PC-9 (cell line): ENCODE measurements at regions of chr5 and their contacts with region 1.

Region 1: DNA sequence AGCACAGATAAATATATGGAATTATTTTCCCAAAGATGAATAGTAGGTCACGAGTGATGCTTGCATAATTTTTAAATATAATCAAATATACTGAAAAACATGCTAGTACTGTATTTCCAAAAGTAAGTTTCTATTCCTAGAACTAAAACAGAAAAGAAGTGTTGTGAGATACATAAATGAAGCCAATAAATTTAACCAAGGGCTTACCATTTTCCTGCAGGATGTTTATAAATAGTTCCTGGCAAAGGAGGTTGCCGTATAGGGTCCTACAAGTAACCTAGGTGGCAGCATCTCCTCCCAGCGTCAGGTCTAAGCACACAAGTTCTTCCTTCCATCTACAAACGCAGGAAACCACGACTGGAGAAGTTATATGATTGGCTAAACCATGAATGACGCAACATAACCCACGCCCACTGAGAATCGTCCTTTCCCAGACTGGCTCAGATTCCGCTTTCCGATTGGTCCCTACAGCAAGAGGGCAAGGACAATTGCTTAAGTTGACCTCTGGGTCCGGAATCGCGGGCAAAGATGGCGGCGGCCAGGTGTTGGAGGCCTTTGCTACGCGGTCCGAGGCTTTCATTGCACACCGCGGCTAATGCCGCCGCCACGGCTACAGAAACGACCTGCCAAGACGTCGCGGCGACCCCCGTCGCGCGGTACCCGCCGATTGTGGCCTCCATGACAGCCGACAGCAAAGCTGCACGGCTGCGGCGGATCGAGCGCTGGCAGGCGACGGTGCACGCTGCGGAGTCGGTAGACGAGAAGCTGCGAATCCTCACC is at the start of gene MRPS30:
- DNase-seq: peak; percentile 98 to 100
- H3K4me3 ChIP-seq: peak within 1 kb of the TSS; percentile 86
- H3K27ac ChIP-seq: peak within 1 kb of the TSS; percentile 64
- H3K4me1 ChIP-seq: peaks cover 26% of the 10 kb centered on the region
- H3K27me3 ChIP-seq: no peaks in the 10 kb centered on the region
- CTCF ChIP-seq: peak; percentile 65; the same call in 1 of the 2 replicates
- total RNA-seq, gene MRPS30: 101 and 106 TPM in 2 replicates

Region 2: GRCh38 chr5:43556857-43557542 is 1251.6 kb before region 1 on chr5 and contains the start of gene PAIP1:
- CTCF ChIA-PET with region 1: no interaction called
- POLR2A ChIA-PET with region 1: no interaction called
- intact Hi-C with region 1: loop called (anchors 2 kb)
- DNase-seq: peak; percentile 86 to 98
- H3K4me3 ChIP-seq: peak within 1 kb of the TSS; percentile 88
- H3K27ac ChIP-seq: peak within 1 kb of the TSS; percentile 76
- H3K4me1 ChIP-seq: peaks cover 34% of the 10 kb centered on the region
- H3K27me3 ChIP-seq: no peaks in the 10 kb centered on the region
- CTCF ChIP-seq: peak; percentile 71
- total RNA-seq, gene PAIP1: 183 and 191 TPM in 2 replicates

Region 3: DNA sequence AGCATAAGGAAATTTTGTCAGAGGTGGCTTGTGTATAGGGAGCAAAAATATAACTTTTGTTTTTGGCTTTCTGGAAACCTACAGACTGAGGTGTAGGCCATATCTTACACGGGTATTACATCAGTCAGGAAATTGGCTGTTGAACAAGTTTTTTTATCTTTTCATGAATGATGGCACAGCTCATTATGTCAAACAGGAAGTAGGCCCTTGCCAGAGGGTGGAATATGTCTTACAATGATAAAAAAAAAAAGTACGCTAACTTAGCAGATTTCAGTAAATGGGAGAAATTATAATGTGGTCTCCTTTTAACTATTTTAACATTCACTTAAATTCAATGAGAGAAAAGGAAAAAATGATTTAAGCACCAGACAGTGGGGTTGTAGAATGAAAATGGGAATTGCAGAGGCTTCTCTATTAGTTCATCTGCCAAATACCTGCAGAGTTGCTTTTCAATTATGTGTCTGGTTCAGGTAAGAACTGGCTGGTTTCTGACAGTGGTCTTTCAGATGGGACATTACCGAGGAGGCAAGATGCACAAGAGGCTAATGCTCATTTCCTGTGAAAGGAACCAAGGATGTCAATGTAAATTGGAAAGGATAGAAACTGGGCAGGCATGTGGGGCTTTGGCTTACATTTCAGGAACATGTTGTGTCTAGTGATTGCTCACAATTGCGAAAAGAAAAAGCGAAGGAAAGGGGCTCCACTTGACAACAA is 1035.7 kb before region 1 on chr5:
- CTCF ChIA-PET with region 1: no interaction called
- POLR2A ChIA-PET with region 1: no interaction called
- intact Hi-C with region 1: loop called (anchors 2 kb)
- DNase-seq: no peak
- H3K4me3 ChIP-seq: no peak overlapping the region
- H3K27ac ChIP-seq: peak overlapping the region; percentile 45
- H3K4me1 ChIP-seq: peaks cover 15% of the 10 kb centered on the region
- H3K27me3 ChIP-seq: no peaks in the 10 kb centered on the region
- CTCF ChIP-seq: no peak

Region 4: GRCh38 chr5:44794376-44794775 is 14.2 kb before region 1 on chr5:
- CTCF ChIA-PET with region 1: no interaction called
- POLR2A ChIA-PET with region 1: no interaction called
- intact Hi-C with region 1: loop called (anchors 1 kb)
- DNase-seq: no peak
- H3K4me3 ChIP-seq: no peak overlapping the region
- H3K27ac ChIP-seq: no peak overlapping the region
- H3K4me1 ChIP-seq: peaks cover 6% of the 10 kb centered on the region; the same call in 1 of the 2 replicates
- H3K27me3 ChIP-seq: no peaks in the 10 kb centered on the region
- CTCF ChIP-seq: no peak

Region 5: DNA sequence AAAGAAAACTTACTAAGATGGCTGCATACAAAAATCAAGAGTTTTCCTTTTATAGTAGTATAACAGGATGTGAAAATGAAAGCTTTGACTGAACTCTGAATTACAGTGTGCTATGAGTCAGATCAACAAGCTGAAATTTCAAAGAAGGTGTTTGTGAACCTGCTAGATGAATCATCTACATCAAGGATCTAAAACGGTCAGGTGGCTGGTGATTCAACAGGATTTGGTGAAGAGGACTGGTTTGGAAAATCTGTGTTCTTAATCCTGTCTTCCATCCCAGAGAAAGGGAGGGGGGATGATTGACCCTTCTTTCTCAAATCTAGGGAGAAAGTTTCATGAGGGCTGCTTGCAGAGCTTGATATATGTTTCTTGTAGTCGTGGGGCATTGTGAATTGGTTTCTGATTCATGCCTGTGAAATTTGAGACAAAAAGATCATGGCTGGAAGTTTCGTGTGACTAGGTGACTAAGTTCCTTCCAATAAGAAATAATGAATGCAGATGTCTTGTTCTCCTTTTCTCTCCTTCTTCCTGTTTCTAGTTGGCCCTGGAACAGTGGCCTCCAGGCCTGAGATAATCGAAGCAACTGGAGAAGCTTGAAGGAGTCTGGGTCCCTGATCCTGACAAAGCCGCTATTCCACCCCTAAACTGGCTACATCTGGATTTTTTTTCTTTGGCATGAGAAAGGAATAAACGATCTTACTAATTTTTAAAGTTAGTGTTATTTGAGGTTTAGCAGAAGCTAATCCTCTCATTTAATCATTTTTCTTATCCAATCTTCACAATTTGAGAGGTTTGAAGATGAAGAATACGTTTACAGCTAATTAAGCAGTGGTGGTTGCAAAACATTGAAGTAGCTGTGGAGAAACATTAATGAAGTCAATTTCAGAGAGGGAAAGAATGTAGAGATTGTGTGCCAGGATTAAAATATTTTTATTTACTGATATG is 67.3 kb after region 1 on chr5:
- CTCF ChIA-PET with region 1: no interaction called
- POLR2A ChIA-PET with region 1: no interaction called
- intact Hi-C with region 1: loop called (anchors 5 kb)
- DNase-seq: peak; percentile 64 to 95
- H3K4me3 ChIP-seq: peak overlapping the region; percentile 34
- H3K27ac ChIP-seq: peak overlapping the region; percentile 89
- H3K4me1 ChIP-seq: peaks cover 19% of the 10 kb centered on the region
- H3K27me3 ChIP-seq: no peaks in the 10 kb centered on the region
- CTCF ChIP-seq: no peak